Gastrocnemius medialis (tissue), 4 donors: ENCODE measurements at regions of chr12 and their contacts with region 1.

Region 1: DNA sequence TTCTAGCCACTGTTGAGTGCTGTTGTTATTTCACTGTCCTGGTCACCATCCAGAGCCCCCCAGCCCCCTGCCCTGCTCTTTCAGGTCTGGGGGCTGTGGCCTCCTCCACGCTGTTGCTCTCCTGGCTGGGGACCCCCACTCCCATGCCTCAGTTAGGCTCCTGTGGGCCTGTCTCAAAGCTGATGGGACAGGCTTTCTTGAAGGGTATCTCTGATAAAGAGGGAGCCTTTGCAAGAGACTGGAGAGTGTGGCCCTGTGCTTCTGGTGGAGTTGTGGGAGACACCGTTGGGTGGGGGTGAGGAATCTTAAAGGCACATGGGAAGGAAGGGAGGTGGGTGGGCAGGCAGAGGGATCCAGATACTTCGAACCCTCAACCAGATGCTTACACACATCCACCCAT is 12.2 kb upstream of the KRT86 start:
- DNase-seq: no peak
- ATAC-seq: no peak
- H3K4me3 ChIP-seq: no peak overlapping the region
- H3K27ac ChIP-seq: no peak overlapping the region
- H3K4me1 ChIP-seq: peaks cover 0 to 3% of the 10 kb centered on the region in 2 donors
- H3K27me3 ChIP-seq: peaks cover 16 to 23% (median 21%) of the 10 kb centered on the region in 3 donors
- CTCF ChIP-seq: no peak
- POLR2A ChIP-seq: no peak

Region 2: GRCh38 chr12:52249051-52249461 is 13.2 kb before region 1 on chr12:
- in situ Hi-C with region 1: no loop called
- intact Hi-C with region 1: loop called (anchors 2 kb)
- DNase-seq: peak; percentile 43 to 69
- ATAC-seq: peak; percentile 9 to 29
- H3K4me3 ChIP-seq: no peak overlapping the region
- H3K27ac ChIP-seq: peak overlapping the region; percentile 60 to 80 (median 76)
- H3K4me1 ChIP-seq: peaks cover 42 to 51% of the 10 kb centered on the region in 2 donors
- H3K27me3 ChIP-seq: no peaks in the 10 kb centered on the region
- CTCF ChIP-seq: no peak
- POLR2A ChIP-seq: no peak